Mammary epithelial cell (primary cell): ENCODE measurements at regions of chr6 and their contacts with region 1.

Region 1: GRCh38 chr6:130697995-130698535 is 129.1 kb upstream of the SMLR1 start:
- DNase-seq: peak; percentile 41
- H3K4me3 ChIP-seq: no peak overlapping the region
- H3K27ac ChIP-seq: peak overlapping the region; percentile 24
- H3K4me1 ChIP-seq: peaks cover 8% of the 10 kb centered on the region
- H3K27me3 ChIP-seq: no peaks in the 10 kb centered on the region
- CTCF ChIP-seq: peak; percentile 94 to 96

Region 2: GRCh38 chr6:130307752-130308361 is 390.2 kb before region 1 on chr6:
- CTCF ChIA-PET with region 1: no interaction called
- dilution Hi-C with region 1: no loop called
- in situ Hi-C with region 1: no loop called
- intact Hi-C with region 1: loop called (anchors 5 kb)
- DNase-seq: peak; percentile 80
- H3K4me3 ChIP-seq: no peak overlapping the region
- H3K27ac ChIP-seq: no peak overlapping the region
- H3K4me1 ChIP-seq: no peaks in the 10 kb centered on the region
- H3K27me3 ChIP-seq: no peaks in the 10 kb centered on the region
- CTCF ChIP-seq: no peak

Region 3: DNA sequence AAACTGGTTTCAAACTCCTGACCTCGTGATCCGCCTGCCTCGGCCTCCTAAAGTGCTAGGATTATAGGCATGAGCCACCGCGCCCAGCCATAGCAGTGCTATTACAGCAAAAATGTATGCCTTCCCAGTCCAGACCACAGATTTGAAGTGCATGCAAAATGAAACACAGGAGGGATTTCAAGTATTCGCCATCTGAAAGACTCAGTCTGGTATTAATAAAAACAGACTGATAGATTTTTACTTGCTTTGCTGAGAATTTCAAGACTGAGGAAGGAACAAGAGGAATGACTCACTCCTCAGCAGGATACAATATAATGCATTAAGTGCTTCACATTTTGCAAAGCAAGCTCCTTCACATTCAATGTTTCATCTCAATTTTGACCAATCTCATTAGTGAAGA is 197.4 kb before region 1 on chr6:
- CTCF ChIA-PET with region 1: no interaction called
- dilution Hi-C with region 1: no loop called
- in situ Hi-C with region 1: no loop called
- intact Hi-C with region 1: loop called (anchors 10 kb)
- DNase-seq: no peak
- H3K4me3 ChIP-seq: no peak overlapping the region
- H3K27ac ChIP-seq: no peak overlapping the region
- H3K4me1 ChIP-seq: peaks cover 4% of the 10 kb centered on the region
- H3K27me3 ChIP-seq: no peaks in the 10 kb centered on the region
- CTCF ChIP-seq: no peak